Activated CD4-positive, alpha-beta memory T cell treated with anti-CD3 and anti-CD28 coated beads for 36 hours (primary cell): ENCODE measurements at regions of chr1 and their contacts with region 1.

Region 1: GRCh38 chr1:172532700-172533509 is at the start of gene SUCO:
- DNase-seq: peak; percentile 100
- H3K4me3 Mint-ChIP-seq: peak within 1 kb of the TSS; percentile 90
- H3K27ac Mint-ChIP-seq: peak within 1 kb of the TSS; percentile 100
- H3K4me1 Mint-ChIP-seq: peaks cover 47% of the 10 kb centered on the region
- H3K27me3 Mint-ChIP-seq: peaks cover 4% of the 10 kb centered on the region
- total RNA-seq, gene SUCO: 18.8 to 20.6 TPM

Region 2: DNA sequence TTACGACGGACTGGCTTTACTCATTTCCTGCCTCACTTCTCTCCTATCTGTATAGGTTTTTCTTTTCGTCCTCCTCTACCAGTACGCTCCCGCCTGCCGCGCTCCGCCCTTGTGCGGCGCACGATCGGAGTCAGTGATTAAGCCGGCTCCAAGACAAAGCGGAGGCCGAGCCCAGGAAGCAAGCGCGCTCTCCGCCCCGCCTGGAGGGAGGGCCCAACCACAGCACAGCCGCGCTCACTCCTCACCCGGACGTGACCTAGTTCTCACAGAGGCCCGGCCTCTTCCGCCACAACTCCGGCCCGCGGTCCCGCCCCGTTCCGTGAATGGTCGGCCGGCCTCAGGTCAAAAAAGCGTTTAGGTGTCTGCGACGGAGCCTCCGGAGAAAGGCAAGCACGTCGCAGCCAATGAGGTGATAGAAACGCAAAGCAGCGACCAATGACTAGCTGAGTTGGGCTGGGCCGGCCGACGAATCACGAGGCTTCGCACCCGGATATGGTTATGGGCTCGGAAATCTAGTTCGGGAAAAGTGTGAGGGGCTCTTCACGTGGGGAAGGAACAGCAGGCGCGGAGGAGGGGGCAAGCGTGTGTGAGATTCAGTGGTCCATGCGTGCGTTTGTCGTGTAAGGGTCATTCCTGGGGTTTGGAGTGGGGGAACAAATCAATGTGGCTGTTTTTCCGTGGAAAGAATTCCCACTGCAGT is 751.6 kb before region 1 on chr1 and contains the start of gene METTL13:
- CTCF ChIA-PET with region 1: no interaction called
- POLR2A ChIA-PET with region 1: no interaction called
- intact Hi-C with region 1: loop called (anchors 1 kb)
- DNase-seq: peak; percentile 99
- H3K4me3 Mint-ChIP-seq: peak within 1 kb of the TSS; percentile 96
- H3K27ac Mint-ChIP-seq: peak within 1 kb of the TSS; percentile 94
- H3K4me1 Mint-ChIP-seq: peaks cover 59% of the 10 kb centered on the region
- H3K27me3 Mint-ChIP-seq: no peaks in the 10 kb centered on the region
- total RNA-seq, gene METTL13: 45.6 to 49.8 TPM

Region 3: DNA sequence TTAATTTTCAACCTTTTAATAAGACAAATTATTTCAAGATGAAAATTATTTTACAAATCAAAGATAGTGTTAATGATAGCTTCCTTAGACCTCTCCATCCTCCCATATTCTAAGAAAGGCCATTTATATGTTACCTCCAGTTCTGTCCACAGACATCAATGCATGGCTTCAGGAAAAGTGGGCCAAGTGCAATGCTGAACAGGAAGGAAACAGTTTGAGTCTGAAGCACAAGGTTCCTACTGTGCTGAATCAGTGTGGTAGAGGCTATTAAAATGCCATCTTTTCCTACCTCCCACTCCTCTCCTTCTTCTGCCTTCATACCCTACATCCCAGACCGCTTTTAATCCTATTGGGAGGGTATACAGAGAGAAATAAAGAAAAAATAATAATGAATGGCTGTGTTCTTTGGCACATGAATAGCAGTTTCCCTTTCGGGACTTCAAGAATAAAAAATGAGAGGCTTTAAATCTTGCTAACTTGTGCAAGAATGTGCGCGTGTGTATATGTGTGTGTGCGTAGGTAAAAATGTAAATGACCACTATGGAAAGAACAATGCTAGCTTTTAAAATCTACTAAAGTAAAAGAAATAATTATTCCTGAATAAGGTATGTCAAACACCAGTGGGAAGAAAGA is 175.0 kb before region 1 on chr1:
- CTCF ChIA-PET with region 1: no interaction called
- POLR2A ChIA-PET with region 1: interaction called, 5 read pairs
- intact Hi-C with region 1: loop called (anchors 10 kb)
- DNase-seq: no peak
- H3K4me3 Mint-ChIP-seq: peak overlapping the region; percentile 11
- H3K27ac Mint-ChIP-seq: peak overlapping the region; percentile 85
- H3K4me1 Mint-ChIP-seq: peaks cover 66% of the 10 kb centered on the region
- H3K27me3 Mint-ChIP-seq: no peaks in the 10 kb centered on the region

Region 4: DNA sequence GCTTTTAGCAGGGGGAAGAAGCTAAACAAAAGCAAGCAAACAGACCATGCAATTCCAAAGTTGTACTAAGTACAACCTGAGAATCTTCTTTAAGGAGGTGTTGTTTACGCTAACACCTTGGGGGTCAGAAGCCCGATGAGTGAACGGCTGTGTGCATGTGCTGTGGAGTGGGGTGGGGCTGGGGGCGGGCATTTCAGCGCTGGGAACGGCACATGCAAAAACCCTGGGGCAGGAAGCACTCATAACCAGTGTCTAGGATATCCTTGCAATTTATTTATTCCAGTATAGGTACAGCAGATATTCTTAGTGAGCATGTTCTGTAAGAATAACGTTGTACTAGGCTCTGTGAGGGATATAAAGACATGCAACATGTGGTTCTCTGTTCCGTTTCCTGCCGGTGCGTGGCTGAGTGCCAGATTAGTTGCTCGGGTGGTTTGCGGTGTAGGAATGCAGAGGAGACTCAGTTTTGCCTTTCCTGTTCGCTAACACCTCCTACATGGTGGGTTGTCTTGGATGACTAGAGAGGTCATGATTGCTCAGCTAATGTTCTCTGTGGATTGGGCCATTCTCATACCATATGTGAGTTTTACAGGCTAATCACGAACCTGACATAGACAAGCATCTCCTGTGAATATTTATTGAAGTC is 129.7 kb after region 1 on chr1:
- CTCF ChIA-PET with region 1: no interaction called
- POLR2A ChIA-PET with region 1: no interaction called
- intact Hi-C with region 1: loop called (anchors 1 kb)
- DNase-seq: peak; percentile 97
- H3K4me3 Mint-ChIP-seq: peak overlapping the region; percentile 78
- H3K27ac Mint-ChIP-seq: peak overlapping the region; percentile 91
- H3K4me1 Mint-ChIP-seq: peaks cover 81% of the 10 kb centered on the region
- H3K27me3 Mint-ChIP-seq: peaks cover 10% of the 10 kb centered on the region

Region 5: DNA sequence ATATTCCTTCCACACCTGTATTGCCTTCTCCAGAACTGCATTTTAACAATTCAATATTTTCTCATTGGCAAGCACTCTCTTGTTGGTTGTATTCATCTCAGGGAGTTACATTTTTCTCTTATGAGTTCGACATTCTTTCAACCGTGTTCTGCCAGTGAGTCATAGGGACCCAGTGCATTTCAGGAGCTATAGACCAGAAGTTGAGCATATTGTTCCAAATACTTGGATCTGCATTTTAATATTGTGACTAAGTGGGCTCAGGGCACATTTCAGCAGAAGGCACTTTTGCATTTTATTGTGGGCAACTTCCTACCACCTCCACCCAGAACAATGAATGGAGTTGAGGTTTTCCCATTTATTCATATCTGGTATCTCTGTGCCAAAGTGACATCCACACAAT is 385.1 kb after region 1 on chr1:
- CTCF ChIA-PET with region 1: no interaction called
- POLR2A ChIA-PET with region 1: no interaction called
- intact Hi-C with region 1: no loop called
- DNase-seq: no peak
- H3K4me3 Mint-ChIP-seq: no peak overlapping the region
- H3K27ac Mint-ChIP-seq: no peak overlapping the region
- H3K4me1 Mint-ChIP-seq: no peaks in the 10 kb centered on the region
- H3K27me3 Mint-ChIP-seq: no peaks in the 10 kb centered on the region

Region 6: DNA sequence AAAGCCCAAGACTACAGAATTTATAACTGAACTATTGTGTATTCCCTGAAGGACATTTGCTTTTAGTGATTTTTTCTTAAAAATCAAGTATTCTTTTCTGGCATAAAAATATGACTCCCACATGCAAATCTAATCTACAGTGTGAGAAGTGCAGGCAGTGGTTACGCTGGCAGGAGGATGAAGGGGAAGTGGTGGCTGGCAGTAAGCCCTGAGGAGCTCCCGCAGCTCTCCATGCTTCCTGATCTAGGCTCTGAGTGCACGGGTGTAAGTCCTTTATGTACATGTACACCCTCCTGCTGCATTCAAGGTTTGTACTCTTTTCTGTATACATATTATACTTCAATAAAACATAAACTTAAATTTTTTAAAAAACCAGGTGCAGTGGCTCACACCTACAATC is 876.7 kb after region 1 on chr1:
- CTCF ChIA-PET with region 1: no interaction called
- POLR2A ChIA-PET with region 1: no interaction called
- intact Hi-C with region 1: no loop called
- DNase-seq: peak; percentile 23
- H3K4me3 Mint-ChIP-seq: no peak overlapping the region
- H3K27ac Mint-ChIP-seq: no peak overlapping the region
- H3K4me1 Mint-ChIP-seq: peaks cover 26% of the 10 kb centered on the region
- H3K27me3 Mint-ChIP-seq: no peaks in the 10 kb centered on the region

Region 7: GRCh38 chr1:173867753-173868265 is 1334.9 kb after region 1 on chr1 and contains the start of gene GAS5:
- CTCF ChIA-PET with region 1: no interaction called
- POLR2A ChIA-PET with region 1: interaction called, 3 read pairs
- intact Hi-C with region 1: loop called (anchors 1 kb)
- DNase-seq: peak; percentile 100
- H3K4me3 Mint-ChIP-seq: peak within 1 kb of the TSS; percentile 99
- H3K27ac Mint-ChIP-seq: peak within 1 kb of the TSS; percentile 98
- H3K4me1 Mint-ChIP-seq: peaks cover 68% of the 10 kb centered on the region
- H3K27me3 Mint-ChIP-seq: peaks cover 3% of the 10 kb centered on the region
- total RNA-seq, gene GAS5: 913 to 929 TPM